ENCODE measurements at regions of chr5 and their contacts with region 1.

Region 1: DNA sequence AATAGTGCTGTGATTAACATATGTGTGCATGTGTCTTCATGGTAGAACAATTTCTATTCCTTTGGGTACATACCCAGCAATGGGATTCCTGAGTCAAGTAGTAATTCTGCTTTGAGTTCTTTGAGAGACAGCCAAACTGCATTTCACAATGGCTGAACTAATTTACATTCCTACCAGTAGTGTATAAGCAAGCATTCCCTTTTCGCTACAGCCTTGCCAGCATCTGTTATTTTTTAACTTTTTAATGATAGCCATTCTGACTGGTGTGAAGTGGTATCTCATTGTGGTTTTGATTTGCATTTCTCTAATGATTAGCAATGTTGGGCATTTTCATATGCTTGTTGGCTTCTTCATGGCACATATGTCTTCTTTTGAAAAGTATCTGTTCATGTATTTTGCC is 308.5 kb downstream of the ARRDC3 start:
- DNase-seq: peak; percentile 69
- H3K4me3 ChIP-seq: no peak overlapping the region
- H3K27ac ChIP-seq: no peak overlapping the region
- H3K27me3 ChIP-seq: no peaks in the 10 kb centered on the region
- CTCF ChIP-seq: peak; percentile 2

Region 2: DNA sequence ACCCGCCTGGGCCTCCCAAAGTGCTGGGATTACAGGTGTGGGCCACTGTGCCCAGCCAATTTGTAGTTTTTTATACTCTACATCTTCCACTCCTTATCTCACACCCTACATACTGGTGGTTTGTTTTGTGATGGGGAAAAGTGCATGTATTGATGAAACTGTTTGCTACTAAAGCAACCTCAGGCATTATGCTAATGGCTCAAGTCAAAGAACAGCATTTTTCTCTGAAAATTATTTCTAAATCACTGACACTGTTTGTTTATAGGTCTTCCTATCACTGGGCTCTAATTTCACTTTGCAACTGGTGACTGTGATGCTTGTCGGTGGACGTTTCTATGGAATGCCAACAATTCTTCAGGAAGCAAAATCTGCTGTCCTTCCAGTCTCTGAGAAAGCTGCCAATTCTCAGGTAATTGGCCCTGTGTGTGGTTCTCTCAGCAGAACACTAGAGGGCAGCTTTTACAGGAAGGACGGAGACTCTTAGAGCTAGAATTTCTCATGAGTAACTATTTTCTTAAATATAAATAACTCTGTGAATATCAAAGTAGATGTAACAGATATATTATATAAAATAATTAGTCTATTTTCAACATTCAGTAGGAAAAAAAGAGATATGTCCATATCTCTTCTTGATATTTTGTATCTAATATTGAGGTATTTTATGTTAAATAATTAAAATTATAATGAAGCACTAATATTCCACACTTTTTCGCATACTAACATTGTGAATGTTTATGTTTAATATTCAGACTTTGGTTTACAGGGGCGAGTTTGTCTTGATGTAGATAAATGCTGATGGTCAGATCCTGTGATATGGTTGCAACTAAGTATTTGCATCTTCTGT is 271.9 kb before region 1 on chr5:
- in situ Hi-C with region 1: no loop called
- DNase-seq: peak; percentile 24
- H3K4me3 ChIP-seq: no peak overlapping the region
- H3K27ac ChIP-seq: no peak overlapping the region
- H3K27me3 ChIP-seq: no peaks in the 10 kb centered on the region
- CTCF ChIP-seq: peak; percentile 86

Region 3: DNA sequence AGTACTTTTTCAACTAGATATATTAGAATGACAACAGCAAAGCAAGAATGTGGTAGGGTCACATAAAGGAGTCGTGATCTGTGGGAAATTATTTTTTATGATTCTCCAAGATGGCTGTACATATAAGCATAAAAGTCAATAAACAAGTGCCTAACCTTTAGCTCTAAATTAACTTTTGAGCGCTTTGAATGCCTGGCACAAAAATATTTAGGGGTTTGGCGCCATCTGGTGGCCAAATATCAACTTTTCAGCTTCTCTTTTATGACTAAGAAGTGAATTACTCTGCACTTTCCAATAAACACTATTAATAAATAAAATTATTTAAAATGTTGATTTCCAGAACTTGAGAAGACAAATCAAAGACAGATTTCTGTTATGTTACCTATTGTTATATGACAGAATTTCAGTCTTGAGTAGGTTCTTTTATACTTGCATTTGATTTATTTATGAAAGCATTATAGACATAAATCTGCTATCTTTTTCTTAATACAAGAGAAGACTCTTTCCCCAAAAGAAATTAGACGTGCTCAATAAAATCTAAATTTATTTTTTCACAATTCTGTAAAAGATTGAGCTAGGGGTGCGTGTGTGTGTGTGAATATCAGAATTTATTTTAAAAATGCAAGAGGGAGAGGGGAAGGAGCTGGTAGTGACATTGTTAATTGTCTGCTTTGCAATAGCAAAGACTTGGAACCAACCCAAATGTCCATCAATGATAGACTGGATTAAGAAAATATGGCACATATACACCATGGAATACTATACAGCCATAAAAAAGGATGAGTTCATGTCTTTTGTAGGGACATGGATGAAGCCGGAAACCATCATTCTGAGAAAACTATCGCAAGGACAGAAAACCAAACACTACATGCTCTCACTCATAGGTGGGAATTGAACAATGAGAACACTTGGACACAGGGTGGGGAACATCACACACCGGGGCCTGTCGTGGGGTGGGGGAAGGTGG is 345.2 kb after region 1 on chr5:
- in situ Hi-C with region 1: loop called (anchors 25 kb)
- DNase-seq: peak; percentile 60
- H3K4me3 ChIP-seq: no peak overlapping the region
- H3K27ac ChIP-seq: no peak overlapping the region
- H3K27me3 ChIP-seq: no peaks in the 10 kb centered on the region
- CTCF ChIP-seq: peak; percentile 54

Measured in brain microvascular endothelial cell (primary cell).